ENCODE measurements at regions of chr20 and their contacts with region 1.

Region 1: DNA sequence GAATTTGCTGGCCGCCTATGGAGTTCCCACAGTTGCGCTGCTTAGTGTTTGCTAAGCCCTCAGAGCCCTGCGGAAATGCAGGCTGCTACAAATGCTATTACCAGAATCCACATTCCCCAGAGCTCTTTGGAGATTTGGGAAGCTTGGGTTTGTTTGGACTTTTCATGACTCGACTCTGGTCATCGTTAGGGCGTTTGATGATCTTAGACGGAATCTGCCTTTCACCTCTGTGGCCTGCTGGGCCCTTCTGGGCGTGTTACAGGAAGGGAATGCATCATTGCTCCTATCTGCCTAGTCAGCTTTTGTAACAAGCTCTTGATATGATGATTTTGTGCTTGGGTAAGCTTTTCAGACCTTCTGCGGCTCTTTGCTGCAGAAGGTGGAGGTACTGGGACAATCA is 50.8 kb downstream of the EYA2 start:
- DNase-seq: no peak
- H3K4me3 ChIP-seq: no peak overlapping the region
- H3K27ac ChIP-seq: no peak overlapping the region
- H3K4me1 ChIP-seq: no peaks in the 10 kb centered on the region
- H3K27me3 ChIP-seq: no peaks in the 10 kb centered on the region
- CTCF ChIP-seq: no peak

Region 2: DNA sequence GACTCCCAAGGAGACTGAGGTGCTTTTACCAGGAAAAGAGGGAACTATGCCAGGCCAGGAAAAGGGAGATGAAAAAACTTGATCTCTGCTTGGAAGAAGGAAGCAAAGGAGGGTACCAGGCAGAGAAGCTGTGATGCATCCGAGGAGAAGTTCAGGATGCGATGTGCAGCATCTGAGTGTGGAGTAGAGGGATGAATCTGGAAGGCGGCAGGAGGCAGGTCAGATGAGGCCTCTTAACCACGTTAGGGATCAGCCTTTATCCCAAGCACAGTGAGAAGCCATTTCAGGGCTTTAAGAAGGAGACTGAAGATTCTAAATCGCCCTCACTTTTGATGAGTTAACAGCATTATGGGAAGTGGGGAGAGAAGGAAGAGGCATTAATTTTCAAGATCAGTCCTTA is 95.7 kb before region 1 on chr20:
- CTCF ChIA-PET with region 1: no interaction called
- dilution Hi-C with region 1: loop called (anchors 5 kb)
- in situ Hi-C with region 1: no loop called
- intact Hi-C with region 1: no loop called
- DNase-seq: no peak
- H3K4me3 ChIP-seq: no peak overlapping the region
- H3K27ac ChIP-seq: no peak overlapping the region
- H3K4me1 ChIP-seq: no peaks in the 10 kb centered on the region
- H3K27me3 ChIP-seq: no peaks in the 10 kb centered on the region
- CTCF ChIP-seq: no peak

Region 3: DNA sequence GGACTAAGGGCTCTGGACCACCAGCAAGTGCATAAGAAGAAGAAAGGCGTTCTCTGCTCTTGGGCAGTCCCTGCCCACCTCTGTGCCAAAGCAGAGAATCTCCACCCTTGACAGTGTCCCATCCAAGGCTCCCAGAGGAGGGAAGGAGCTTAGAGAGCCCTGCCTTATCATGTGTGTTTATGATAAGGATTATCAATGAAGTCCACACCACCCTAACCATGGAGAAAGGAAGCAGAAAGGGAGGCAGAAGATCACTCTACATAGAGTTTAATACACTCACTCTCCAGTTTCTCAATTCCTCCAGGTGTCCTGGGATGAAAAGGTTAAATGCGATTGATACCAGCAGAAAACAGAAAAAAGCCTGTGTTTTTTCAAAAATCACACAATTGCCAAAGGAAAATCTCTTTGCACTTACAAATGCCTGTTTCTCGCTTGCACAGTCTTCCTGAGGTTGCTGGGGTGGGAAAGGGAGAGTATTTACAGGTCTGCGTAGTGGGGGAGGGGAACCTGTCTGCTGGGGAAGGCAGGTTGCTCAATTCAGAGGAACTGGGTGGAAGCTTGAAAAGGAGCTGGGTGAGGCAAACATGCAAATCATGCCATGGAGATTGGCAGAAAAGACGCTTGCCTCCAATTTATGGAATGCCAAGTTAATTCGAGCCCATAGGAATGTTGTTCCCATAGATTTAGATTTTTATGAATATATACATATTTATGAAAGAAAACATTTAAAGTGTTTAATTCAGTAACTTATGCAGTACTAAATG is 53.2 kb after region 1 on chr20:
- CTCF ChIA-PET with region 1: no interaction called
- dilution Hi-C with region 1: loop called (anchors 5 kb)
- in situ Hi-C with region 1: no loop called
- intact Hi-C with region 1: no loop called
- DNase-seq: no peak
- H3K4me3 ChIP-seq: no peak overlapping the region
- H3K27ac ChIP-seq: no peak overlapping the region
- H3K4me1 ChIP-seq: no peaks in the 10 kb centered on the region
- H3K27me3 ChIP-seq: no peaks in the 10 kb centered on the region
- CTCF ChIP-seq: no peak

Region 4: GRCh38 chr20:47043086-47043485 is 97.6 kb after region 1 on chr20:
- CTCF ChIA-PET with region 1: no interaction called
- dilution Hi-C with region 1: loop called (anchors 5 kb)
- in situ Hi-C with region 1: no loop called
- intact Hi-C with region 1: no loop called
- DNase-seq: no peak
- H3K4me3 ChIP-seq: no peak overlapping the region
- H3K27ac ChIP-seq: no peak overlapping the region
- H3K4me1 ChIP-seq: no peaks in the 10 kb centered on the region
- H3K27me3 ChIP-seq: no peaks in the 10 kb centered on the region
- CTCF ChIP-seq: no peak